HepG2 (cell line): ENCODE measurements at regions of chr10 and their contacts with region 1.

Region 1: DNA sequence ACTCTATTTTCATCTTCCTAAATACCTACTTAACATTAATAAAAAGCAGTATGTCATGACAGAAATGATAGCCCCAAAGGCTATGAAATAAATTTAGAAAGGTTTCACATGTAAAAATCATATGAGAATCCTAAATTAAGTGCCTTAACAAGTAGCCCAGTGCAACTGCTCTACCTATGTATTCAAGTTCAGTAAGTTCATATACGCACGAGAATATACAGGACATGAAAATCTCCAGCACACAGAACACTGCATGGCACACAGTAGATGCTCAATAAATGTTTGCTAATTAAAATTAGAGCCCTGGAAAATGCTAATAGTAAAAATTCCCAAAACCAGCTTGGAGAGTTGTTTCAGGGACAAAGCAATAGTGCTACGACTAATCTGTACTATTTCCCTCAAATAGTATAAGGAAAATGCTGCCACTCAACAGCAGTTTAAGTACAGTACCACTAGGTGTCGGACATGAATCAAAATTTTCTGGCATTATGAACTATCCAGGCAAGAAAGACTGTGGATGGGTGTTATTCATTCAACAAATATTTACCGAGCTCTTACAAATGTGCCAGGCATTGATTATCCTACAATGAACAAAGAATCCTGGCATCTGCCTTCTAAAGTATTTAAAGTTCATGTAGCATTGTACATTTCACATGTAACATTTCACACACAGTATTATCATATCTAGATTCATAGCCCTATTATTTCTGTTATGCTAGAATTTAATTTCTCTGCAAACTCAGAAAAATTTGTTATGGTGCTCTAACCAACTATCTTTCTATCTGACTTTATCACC is 80.9 kb downstream of the ARHGAP21 start:
- DNase-seq: peak; percentile 89
- ATAC-seq: peak; percentile 99
- H3K4me3 ChIP-seq: no peak overlapping the region
- H3K27ac ChIP-seq: peak overlapping the region; percentile 5
- H3K4me1 ChIP-seq: peaks cover 12% of the 10 kb centered on the region
- H3K27me3 ChIP-seq: no peaks in the 10 kb centered on the region
- CTCF ChIP-seq: peak; percentile 85
- EP300 ChIP-seq: peak in 1 of 2 experiments; percentile 57; a peak in 1 of 4 replicates
- POLR2A ChIP-seq: no peak
- RAD21 ChIP-seq: peak; percentile 81

Region 2: DNA sequence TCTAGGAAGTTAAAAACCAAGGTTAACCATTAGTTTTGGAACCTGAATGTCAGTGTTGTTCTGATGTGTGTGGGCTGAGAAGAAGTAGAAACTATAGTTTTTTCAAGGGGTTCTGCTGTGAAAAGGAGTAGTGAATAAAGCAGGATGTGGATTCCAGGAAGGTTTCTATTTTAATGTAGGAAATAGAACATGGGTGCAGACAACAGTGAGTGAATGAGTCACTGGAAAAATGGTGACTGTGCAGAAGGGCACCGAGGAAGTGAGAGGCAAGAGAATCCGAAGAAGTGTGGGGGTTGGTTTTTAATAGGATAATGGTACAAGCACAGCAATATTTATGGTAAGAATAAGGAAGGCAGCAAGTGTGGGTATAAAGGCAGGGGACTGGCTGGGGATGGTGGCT is 39.5 kb before region 1 on chr10:
- CTCF ChIA-PET with region 1: no interaction called
- POLR2A ChIA-PET with region 1: no interaction called
- in situ Hi-C with region 1: no loop called
- intact Hi-C with region 1: no loop called
- DNase-seq: no peak
- ATAC-seq: no peak
- H3K4me3 ChIP-seq: no peak overlapping the region
- H3K27ac ChIP-seq: no peak overlapping the region
- H3K4me1 ChIP-seq: no peaks in the 10 kb centered on the region
- H3K27me3 ChIP-seq: no peaks in the 10 kb centered on the region
- CTCF ChIP-seq: no peak
- EP300 ChIP-seq: no peak
- POLR2A ChIP-seq: no peak
- RAD21 ChIP-seq: no peak

Region 3: DNA sequence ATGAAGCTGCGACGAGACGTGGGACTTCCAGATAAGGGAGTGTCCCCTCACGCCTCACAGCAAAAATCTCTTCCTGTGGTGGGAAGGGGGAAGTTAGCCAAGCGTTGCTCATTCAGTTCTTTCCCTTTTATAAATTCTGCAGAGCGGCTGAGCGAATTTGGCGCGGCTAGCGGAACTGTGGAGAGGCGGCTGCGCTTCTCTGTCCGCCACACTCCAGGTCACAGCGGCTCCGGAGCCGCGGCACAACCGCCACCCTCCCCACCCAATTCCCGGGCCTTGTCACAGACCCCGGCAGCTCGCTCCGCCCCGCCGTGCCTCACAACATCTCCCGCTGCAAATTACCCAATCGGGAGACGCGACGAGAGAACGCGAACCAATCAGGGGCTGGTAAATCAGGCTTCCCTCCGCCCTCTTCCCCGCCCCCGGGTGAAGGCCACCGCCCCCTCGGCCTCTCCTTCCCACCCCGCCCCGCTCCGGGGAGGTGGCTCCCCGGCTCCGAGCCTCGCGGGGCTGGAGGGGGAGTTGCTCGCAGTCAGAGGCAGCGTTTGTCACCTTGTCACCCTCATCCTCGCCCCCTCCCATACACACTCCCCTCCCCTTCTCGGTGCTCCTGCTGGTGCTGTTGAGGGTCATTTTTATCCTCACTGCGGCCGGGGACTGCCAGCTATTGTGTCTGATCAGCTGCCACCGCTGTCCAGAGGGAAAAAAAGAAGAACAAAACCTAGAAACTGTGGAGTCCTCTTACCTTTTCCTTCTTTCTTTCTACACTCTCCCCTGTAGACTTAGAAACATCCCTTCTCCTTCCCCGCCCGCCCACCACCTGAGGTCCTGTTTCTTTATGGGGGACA is 81.8 kb after region 1 on chr10:
- CTCF ChIA-PET with region 1: no interaction called
- POLR2A ChIA-PET with region 1: no interaction called
- in situ Hi-C with region 1: no loop called
- intact Hi-C with region 1: loop called (anchors 1 kb)
- DNase-seq: peak; percentile 94
- ATAC-seq: peak; percentile 81
- H3K4me3 ChIP-seq: peak overlapping the region; percentile 73 to 83 (median 83)
- H3K27ac ChIP-seq: peak overlapping the region; percentile 81
- H3K4me1 ChIP-seq: peaks cover 31% of the 10 kb centered on the region
- H3K27me3 ChIP-seq: no peaks in the 10 kb centered on the region
- CTCF ChIP-seq: no peak
- EP300 ChIP-seq: no peak
- POLR2A ChIP-seq: peak; percentile 87 to 91
- RAD21 ChIP-seq: no peak

Region 4: GRCh38 chr10:24806262-24806661 is 163.4 kb after region 1 on chr10:
- CTCF ChIA-PET with region 1: no interaction called
- POLR2A ChIA-PET with region 1: no interaction called
- in situ Hi-C with region 1: no loop called
- intact Hi-C with region 1: no loop called
- DNase-seq: no peak
- ATAC-seq: no peak
- H3K4me3 ChIP-seq: no peak overlapping the region
- H3K27ac ChIP-seq: no peak overlapping the region
- H3K4me1 ChIP-seq: peaks cover under 1% of the 10 kb centered on the region; the same call in 1 of the 2 replicates
- H3K27me3 ChIP-seq: no peaks in the 10 kb centered on the region
- CTCF ChIP-seq: no peak
- EP300 ChIP-seq: no peak
- POLR2A ChIP-seq: no peak
- RAD21 ChIP-seq: no peak

Region 5: GRCh38 chr10:24974976-24975375 is 332.2 kb after region 1 on chr10:
- CTCF ChIA-PET with region 1: no interaction called
- POLR2A ChIA-PET with region 1: no interaction called
- in situ Hi-C with region 1: loop called (anchors 25 kb)
- intact Hi-C with region 1: no loop called
- DNase-seq: peak; percentile 32
- ATAC-seq: peak; percentile 67
- H3K4me3 ChIP-seq: no peak overlapping the region
- H3K27ac ChIP-seq: no peak overlapping the region
- H3K4me1 ChIP-seq: peaks cover 23% of the 10 kb centered on the region
- H3K27me3 ChIP-seq: no peaks in the 10 kb centered on the region
- CTCF ChIP-seq: no peak
- EP300 ChIP-seq: no peak
- POLR2A ChIP-seq: no peak
- RAD21 ChIP-seq: no peak

Region 6: DNA sequence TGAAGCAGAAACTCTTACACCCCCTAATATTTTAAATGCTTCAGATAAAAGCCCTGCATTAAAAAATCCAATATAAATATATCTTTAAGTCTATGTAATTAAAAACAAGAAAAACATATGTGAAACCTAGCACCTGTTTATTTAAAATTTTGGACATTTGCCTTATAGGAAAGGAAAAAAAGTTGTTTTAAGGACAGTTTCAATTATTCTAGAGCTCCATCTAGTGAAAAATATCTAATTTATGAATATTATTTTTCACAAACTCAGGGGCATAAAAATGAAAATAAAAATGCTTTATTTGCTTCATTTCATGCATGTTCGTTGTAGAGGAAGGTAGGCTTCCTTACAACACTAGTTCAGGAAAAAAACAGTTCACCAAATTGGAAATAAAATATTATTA is 347.0 kb after region 1 on chr10:
- CTCF ChIA-PET with region 1: no interaction called
- POLR2A ChIA-PET with region 1: no interaction called
- in situ Hi-C with region 1: loop called (anchors 25 kb)
- intact Hi-C with region 1: loop called (anchors 5 kb)
- DNase-seq: no peak
- ATAC-seq: no peak
- H3K4me3 ChIP-seq: no peak overlapping the region
- H3K27ac ChIP-seq: no peak overlapping the region
- H3K4me1 ChIP-seq: no peaks in the 10 kb centered on the region
- H3K27me3 ChIP-seq: peaks cover 0 to 1% of the 10 kb centered on the region in 2 experiments; a peak in 4 of 5 replicates
- CTCF ChIP-seq: no peak
- EP300 ChIP-seq: no peak
- POLR2A ChIP-seq: no peak
- RAD21 ChIP-seq: no peak

Region 7: GRCh38 chr10:25016376-25017154 is 373.7 kb after region 1 on chr10 and contains the start of gene THNSL1:
- CTCF ChIA-PET with region 1: no interaction called
- POLR2A ChIA-PET with region 1: no interaction called
- in situ Hi-C with region 1: no loop called
- intact Hi-C with region 1: loop called (anchors 2 kb)
- DNase-seq: peak; percentile 97
- ATAC-seq: peak; percentile 99
- H3K4me3 ChIP-seq: peak within 1 kb of the TSS; percentile 64 to 84 (median 71)
- H3K27ac ChIP-seq: peak within 1 kb of the TSS; percentile 100
- H3K4me1 ChIP-seq: peaks cover 32% of the 10 kb centered on the region
- H3K27me3 ChIP-seq: no peaks in the 10 kb centered on the region
- CTCF ChIP-seq: no peak
- EP300 ChIP-seq: no peak; a peak in 1 of 4 replicates
- POLR2A ChIP-seq: peak; percentile 96 to 99
- RAD21 ChIP-seq: peak; percentile 53
- total RNA-seq, gene THNSL1: 3.8 and 7.3 TPM in 2 replicates

Region 8: DNA sequence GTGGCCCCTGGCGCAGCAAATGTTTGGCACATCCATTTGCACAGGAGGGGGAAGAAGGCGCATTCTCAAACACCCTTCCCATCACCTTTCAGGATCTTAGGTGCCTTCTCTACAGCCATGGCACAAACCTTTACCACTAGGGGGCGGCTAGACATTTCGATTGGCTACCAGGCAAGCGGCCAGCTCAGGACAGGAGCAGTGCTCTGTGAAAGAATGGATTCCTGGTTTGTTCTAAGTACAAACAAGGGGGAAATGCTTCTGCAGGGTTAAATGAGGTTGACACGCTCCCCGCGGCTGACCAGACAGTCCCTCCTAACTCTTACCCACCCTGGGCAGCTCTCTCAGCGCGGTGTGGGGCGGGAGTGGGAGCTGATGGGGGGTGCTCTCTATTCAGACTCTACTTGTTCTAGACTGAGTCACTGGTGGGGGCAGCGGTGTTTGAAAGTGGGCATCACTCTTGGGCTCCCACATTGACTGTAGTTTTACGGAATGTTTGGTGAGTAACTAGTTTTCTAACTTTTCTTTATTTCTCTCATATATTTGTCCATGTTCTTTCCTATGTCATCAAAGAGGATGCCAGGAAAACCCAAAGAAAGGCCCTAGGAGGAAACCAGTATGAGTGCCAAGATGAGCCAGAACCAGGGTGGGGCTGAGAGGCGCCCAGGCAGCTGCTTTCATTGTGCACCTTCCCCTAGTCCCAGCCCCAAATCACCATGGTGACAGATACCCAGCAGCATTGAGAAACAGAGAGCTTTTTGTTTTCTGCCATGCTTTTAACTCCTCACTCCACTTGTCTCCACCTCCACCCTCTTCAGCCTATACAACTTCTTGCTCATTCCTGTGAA is 470.6 kb after region 1 on chr10:
- CTCF ChIA-PET with region 1: no interaction called
- POLR2A ChIA-PET with region 1: no interaction called
- in situ Hi-C with region 1: no loop called
- intact Hi-C with region 1: loop called (anchors 1 kb)
- DNase-seq: peak; percentile 57
- ATAC-seq: peak; percentile 99
- H3K4me3 ChIP-seq: no peak overlapping the region; a peak in 1 of 6 replicates
- H3K27ac ChIP-seq: no peak overlapping the region
- H3K4me1 ChIP-seq: peaks cover 11% of the 10 kb centered on the region
- H3K27me3 ChIP-seq: no peaks in the 10 kb centered on the region; a peak in 1 of 5 replicates
- CTCF ChIP-seq: peak; percentile 89
- EP300 ChIP-seq: no peak
- POLR2A ChIP-seq: no peak
- RAD21 ChIP-seq: peak; percentile 43; the same call in 1 of the 2 replicates

Region 9: DNA sequence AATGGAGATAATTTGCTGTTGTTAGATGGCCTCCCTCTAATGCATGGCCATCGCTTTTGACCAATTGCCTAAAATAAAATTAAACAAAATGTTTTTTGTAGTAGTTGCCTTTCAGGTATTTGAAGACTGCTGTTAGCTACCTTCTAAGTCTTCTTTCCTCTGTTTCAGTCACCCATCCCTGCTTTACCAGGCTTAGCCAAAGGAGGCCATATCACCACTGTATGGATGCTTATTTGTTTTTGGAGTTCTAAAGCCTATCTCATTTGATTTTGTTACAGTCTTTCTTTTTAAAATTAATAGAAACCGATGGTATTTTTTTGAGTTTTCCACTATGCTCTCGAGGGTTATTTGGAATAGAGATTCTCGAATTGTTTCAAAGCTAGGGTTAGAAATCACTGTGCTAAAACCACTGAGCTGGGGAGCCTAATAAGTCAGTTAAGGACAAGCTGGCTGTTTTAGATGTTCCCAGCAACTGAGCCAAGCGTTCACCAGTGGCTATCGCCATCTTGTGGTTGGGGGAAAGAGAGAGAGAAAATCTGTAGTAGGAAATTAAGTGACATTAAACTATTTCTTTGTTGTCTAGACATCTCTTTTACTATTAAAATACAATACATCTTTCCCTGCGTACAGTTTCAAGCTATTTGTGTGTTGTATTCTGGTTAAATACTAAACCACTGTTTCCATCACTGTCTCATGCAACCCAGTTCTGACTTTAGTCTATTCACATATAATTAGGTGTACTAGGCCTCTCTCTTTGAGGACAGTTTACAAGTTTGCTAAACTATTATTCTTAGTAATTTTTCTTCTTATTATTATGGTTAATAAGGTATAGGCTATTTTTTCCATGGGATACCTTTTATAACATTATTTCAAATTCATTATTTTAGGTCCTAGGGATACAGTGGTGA is 584.2 kb after region 1 on chr10:
- CTCF ChIA-PET with region 1: no interaction called
- POLR2A ChIA-PET with region 1: no interaction called
- in situ Hi-C with region 1: no loop called
- intact Hi-C with region 1: loop called (anchors 1 kb)
- DNase-seq: peak; percentile 21
- ATAC-seq: peak; percentile 69
- H3K4me3 ChIP-seq: no peak overlapping the region
- H3K27ac ChIP-seq: no peak overlapping the region
- H3K4me1 ChIP-seq: no peaks in the 10 kb centered on the region
- H3K27me3 ChIP-seq: no peaks in the 10 kb centered on the region
- CTCF ChIP-seq: peak; percentile 78
- EP300 ChIP-seq: no peak
- POLR2A ChIP-seq: no peak
- RAD21 ChIP-seq: 0 out of 2 replicates have a peak, but pooled peaks have one; percentile 32